ENCODE measurements at regions of chr3 and their contacts with region 1.

Region 1: DNA sequence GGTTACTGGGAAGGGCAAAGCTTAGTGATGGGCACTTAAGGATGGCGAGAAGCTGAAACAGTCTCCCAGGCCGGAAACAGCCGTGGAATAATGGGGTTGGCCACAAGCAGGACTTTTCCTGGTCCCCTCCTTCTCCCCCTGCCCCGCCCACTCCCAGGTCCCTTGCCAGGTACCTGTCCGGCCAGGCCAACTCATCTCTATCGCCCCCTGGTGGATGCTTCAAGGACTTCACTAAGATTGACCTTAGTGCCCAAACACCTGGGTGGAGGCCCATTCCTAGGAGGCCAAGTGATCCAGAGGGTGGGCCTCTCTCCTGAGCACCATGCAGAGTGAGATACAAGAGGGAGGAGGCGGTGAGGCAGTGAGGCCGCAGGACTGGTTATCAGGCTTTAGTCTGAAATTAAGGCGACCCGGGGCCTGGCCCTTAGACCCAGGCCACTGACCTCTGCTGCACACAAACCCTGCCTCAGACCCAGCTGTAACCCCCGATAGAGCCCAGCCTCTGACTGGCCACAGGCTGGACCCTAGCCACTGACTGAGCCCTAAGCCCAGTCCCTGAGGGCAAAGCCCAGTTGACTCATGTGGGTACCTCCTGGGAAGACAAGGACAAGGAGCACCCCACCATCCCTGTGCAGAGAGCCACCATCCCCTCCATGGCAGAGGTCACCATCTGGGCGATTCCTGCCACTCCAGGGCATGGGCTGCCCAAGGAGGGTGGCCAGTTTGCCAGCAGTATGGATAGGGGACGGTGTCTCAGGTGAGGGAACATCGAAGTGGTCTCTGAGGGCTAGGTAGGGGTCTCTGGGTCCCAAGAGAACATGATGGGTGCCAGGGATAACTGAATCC is 37.6 kb downstream of the VIPR1 start:
- DNase-seq: peak; percentile 89
- H3K4me3 ChIP-seq: no peak overlapping the region
- H3K27ac ChIP-seq: no peak overlapping the region
- H3K4me1 ChIP-seq: peaks cover 6% of the 10 kb centered on the region
- H3K27me3 ChIP-seq: no peaks in the 10 kb centered on the region
- CTCF ChIP-seq: peak; percentile 81

Region 2: DNA sequence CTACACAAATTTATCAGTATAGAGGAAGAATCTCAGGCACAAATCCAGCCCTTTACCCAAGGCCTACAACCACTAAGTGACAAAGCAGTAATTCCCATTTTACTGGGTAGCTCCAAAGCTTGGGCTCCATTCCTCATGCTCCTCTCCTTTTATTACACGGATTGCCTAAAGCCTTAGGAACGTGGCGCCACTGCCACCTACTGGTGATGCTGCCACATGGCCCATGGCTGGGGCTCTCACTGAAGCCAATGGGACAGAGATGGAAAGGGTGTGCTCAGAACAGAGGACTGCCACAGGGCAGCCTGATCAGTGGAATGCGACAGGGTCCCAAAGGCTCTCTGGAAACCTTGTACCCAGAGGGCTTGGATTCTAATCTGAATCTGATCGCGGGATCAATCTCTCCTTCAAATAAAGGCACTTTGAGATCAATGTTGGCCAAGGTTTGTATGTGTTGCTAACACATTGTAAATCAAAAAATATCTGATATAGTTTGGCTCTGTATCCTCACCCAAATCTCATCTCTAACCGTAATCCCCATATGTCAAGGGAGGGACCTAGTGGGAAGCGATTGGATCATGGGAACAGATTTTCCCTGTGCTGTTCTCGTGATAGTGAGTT is 96.2 kb before region 1 on chr3:
- intact Hi-C with region 1: loop called (anchors 5 kb)
- DNase-seq: peak; percentile 87
- H3K4me3 ChIP-seq: no peak overlapping the region
- H3K27ac ChIP-seq: no peak overlapping the region
- H3K4me1 ChIP-seq: no peaks in the 10 kb centered on the region
- H3K27me3 ChIP-seq: no peaks in the 10 kb centered on the region
- CTCF ChIP-seq: peak; percentile 95

Region 3: DNA sequence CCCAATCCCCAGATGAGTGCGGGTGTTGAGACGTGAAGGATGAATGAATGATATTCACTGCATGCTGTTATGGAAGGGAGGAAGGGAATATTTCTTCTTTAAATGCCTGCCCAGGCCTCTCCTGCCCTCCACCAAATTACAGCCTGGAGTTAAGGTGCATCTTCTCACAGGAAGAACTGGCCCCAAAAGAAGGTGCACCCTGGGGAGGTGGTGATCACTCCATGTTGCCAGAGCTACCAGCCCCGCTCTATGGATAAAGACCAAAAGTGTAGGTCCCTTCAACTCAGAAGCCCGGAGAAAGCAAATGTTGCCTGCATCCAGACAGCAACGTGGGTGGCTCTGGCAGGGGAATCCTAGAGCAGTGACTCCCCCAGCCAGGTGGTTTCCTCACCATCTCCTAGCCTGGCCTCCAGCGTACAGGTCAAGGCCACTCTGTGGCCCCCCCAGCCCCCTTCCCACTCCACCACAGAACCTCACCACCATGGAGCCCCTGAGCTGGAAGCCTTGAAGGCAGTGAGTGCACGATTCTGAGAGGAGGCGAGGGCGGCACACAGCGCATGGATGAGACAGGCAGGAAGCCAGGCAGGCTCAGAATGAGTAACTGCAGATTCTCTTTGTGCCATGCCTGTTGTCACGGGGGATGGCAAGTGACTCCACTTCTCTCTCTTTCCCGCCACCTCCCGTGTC is 41.2 kb before region 1 on chr3:
- intact Hi-C with region 1: loop called (anchors 2 kb)
- DNase-seq: peak; percentile 15
- H3K4me3 ChIP-seq: no peak overlapping the region
- H3K27ac ChIP-seq: no peak overlapping the region
- H3K4me1 ChIP-seq: peaks cover 5% of the 10 kb centered on the region
- H3K27me3 ChIP-seq: peaks cover 26% of the 10 kb centered on the region
- CTCF ChIP-seq: no peak

Region 4: DNA sequence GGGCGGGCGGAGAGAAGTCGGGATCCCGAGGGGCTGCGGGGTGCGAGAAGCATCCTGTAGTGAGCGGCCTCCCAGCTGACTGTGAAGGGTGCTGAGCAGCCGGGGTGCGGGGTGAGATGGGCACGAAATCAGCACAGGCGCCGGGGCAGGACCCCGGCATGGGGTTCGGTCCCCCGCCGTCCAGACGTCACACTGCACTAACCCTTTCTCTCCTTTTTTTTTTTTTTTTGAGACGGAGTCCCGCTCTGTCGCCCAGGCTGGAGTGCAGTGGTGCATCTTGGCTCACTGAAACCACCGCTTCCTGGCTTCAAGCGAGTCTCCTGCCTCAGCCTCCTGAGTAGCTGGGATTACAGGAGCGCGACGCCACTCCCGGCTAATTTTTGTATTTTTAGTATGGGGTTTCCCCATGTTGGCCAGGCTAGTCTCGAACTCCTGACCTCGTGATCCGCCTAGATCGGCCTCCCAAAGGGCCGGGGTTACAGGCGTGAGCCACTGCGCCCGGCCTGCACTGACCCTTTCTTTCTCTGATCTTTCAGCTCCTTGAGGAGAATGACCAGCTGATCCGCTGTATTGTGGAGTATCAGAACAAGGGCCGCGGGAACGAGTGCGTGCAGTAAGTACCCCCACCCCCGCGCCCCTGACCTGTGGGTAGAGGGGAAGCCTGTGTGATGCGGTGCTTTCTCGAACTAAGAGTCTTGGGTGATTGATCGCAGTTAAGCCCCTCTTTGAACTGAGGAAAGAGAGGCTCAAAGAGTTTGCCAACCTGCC is 51.1 kb after region 1 on chr3:
- intact Hi-C with region 1: no loop called
- DNase-seq: no peak
- H3K4me3 ChIP-seq: peak overlapping the region; percentile 75
- H3K27ac ChIP-seq: peak overlapping the region; percentile 75
- H3K4me1 ChIP-seq: peaks cover 5% of the 10 kb centered on the region
- H3K27me3 ChIP-seq: no peaks in the 10 kb centered on the region
- CTCF ChIP-seq: no peak